Cardiac septum (tissue), 1 donor: ENCODE measurements at regions of chr18 and their contacts with region 1.

Region 1: DNA sequence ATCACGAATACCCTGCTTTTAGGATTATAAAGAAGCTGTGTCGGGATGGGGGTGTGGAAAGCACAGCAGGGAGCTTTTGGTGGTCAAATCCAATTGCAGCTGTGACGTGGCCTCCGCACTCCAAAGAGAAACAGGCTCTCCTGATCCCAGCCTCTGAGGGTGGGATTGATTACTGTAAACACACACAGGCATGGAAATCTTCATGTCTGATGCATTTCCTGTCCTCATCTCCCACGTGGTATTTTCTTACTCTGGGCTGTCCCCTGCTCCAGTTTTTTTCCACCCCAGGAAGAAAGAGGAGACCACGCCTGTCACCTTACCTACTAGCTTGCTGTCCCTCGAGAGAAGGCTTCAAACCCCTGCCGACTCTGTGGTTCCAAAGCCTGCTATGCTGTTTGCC is 22.7 kb downstream of the RNF152 start:
- DNase-seq: no peak

Region 2: DNA sequence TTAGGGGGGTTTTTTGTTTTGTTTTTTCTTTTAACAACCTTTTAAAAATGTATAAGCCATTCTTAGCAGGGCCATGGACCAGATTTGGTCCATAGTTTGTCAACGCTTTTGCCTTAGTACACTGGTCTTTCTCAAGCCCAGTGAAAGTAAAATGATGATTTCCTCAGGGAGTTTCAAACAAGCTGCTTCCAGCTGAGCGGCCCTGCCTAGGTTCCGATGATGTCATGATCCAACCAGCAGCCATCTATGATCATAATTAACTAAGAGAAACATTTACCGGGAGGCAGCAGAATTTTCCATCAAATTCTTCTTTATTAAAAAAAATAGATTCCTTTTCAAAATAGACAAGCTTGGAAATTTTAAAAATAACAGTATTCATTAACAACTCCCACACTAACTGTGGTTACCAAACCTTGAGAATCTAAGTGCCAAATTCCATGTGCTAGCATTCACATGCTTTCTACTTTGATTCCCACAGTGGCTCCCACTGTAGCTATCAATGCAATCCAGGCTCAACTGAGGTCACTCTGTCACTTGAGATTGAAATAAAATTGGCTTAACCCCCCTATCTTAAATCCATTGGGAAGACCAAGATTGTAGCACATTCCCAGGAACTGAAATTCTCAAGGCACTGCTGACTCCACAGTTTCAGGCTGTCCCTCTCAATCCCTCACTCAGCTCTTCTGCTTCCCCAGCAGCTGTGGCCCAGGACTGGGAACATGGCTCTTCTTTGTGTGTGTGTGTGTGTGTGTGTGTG is 126.2 kb before region 1 on chr18:
- intact Hi-C with region 1: no loop called
- DNase-seq: no peak

Region 3: DNA sequence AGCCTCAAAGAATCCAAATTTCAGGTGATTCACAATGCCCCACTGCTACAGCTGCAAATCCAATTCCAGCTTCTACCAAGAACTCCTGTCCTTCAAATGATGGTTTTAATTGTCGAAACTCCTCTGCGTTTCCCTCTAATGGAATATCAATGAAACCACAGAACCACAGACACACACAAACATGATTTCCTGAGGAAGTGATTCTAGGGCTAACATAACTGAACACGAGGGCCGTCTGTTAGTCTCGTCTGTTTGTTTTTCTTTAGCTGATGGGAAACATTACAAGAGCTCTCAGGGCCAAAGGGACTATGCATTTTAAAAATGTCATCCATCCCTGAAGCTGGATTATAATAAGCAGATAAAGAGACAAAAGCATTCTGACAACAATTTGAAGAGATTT is 36.8 kb before region 1 on chr18:
- intact Hi-C with region 1: loop called (anchors 2 kb)
- DNase-seq: no peak